Activated CD8-positive, alpha-beta T cell treated with anti-CD3 and anti-CD28 coated beads, Interleukin-2, amount 10 ng/mL, durations not matched to agents 7 days and 5 days (primary cell): ENCODE measurements at regions of chr10 and their contacts with region 1.

Region 1: DNA sequence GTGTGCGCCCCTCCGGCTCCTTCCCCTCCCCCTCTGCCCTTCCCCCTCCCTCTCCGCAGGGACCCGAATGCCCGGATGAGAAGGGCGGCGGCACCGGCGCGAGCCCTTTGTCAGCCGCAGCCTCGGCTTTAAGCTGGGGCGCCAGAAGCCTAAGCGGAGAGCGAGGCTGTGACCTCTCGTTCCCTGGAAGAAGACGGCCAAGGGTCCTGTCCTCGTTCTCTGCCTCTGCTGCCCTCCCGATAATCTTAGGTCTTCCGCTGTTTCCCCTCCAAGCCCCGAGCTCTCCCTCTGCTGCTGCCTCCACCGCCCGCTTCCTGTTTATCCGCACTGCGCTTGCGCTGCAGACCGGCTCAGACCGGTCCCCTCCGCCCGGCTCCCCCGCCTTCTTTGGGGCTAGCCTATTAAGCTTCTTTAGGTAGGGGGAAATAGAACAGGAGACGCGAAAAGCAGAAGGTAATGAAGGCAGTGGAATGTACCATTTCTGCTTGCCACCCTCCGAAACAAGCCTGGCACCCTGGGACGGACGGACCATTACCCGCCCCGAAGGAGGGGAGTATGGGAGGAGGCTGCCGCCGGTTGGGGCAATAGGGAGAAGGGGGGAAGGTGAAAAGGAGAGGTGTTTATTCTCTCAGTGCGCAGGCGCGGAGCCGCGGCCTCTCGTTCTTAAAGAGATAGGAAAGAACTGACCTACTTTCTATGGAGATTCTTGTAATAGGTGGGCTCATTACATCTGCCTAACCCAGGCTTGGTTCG is at the start of gene OGA:
- DNase-seq: peak; percentile 99
- ATAC-seq: peak; percentile 93
- H3K4me3 Mint-ChIP-seq: peak within 1 kb of the TSS; percentile 96
- H3K27ac Mint-ChIP-seq: peak within 1 kb of the TSS; percentile 99
- H3K4me1 Mint-ChIP-seq: peaks cover 31% of the 10 kb centered on the region
- H3K27me3 Mint-ChIP-seq: no peaks in the 10 kb centered on the region
- total RNA-seq, gene OGA: 122 to 129 TPM

Region 2: GRCh38 chr10:101693978-101694673 is 124.2 kb before region 1 on chr10:
- CTCF ChIA-PET with region 1: no interaction called
- POLR2A ChIA-PET with region 1: interaction called, 10 read pairs
- DNase-seq: peak; percentile 73
- ATAC-seq: peak; percentile 83
- H3K4me3 Mint-ChIP-seq: peak overlapping the region; percentile 97
- H3K27ac Mint-ChIP-seq: peak overlapping the region; percentile 98
- H3K4me1 Mint-ChIP-seq: peaks cover 35% of the 10 kb centered on the region
- H3K27me3 Mint-ChIP-seq: no peaks in the 10 kb centered on the region

Region 3: DNA sequence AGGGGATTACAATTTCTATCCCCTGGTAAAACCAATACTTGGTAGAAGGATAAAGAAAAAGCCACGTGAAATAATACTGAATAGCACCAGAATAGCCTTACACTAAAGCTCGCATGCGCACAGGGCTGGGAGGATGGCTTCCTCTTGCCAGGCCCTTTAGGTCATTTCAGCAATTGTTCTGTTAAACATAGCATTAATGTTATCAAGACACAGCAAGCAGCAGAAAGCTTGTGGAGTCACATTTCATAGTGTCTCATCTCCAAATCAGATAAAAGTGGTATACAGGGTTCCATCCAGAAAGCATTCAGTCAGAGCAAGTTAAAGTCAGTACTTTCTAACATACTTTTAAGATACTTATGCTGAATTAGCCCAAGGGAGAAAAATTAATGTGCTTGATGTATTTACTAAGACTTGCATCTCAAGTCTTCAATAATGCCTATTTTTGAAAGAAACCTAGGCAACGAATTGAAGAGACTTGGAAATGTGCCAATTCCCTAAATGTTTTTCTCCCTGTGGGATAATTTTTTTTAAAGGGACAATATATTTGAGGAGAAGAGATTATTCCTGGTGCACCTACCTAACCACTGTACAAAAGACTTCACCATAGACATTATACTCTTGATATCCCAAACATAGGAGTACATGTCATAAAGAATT is 20.8 kb before region 1 on chr10:
- CTCF ChIA-PET with region 1: interaction called, 3 read pairs
- POLR2A ChIA-PET with region 1: interaction called, 12 read pairs
- DNase-seq: no peak
- ATAC-seq: no peak
- H3K4me3 Mint-ChIP-seq: no peak overlapping the region
- H3K27ac Mint-ChIP-seq: no peak overlapping the region
- H3K4me1 Mint-ChIP-seq: peaks cover 8% of the 10 kb centered on the region
- H3K27me3 Mint-ChIP-seq: no peaks in the 10 kb centered on the region

Region 4: GRCh38 chr10:101830322-101831168 is 12.2 kb after region 1 on chr10:
- CTCF ChIA-PET with region 1: interaction called, 22 read pairs
- POLR2A ChIA-PET with region 1: interaction called, 49 read pairs
- DNase-seq: peak; percentile 92
- ATAC-seq: peak; percentile 84
- H3K4me3 Mint-ChIP-seq: peak overlapping the region; percentile 66
- H3K27ac Mint-ChIP-seq: peak overlapping the region; percentile 82
- H3K4me1 Mint-ChIP-seq: peaks cover 52% of the 10 kb centered on the region
- H3K27me3 Mint-ChIP-seq: no peaks in the 10 kb centered on the region

Region 5: DNA sequence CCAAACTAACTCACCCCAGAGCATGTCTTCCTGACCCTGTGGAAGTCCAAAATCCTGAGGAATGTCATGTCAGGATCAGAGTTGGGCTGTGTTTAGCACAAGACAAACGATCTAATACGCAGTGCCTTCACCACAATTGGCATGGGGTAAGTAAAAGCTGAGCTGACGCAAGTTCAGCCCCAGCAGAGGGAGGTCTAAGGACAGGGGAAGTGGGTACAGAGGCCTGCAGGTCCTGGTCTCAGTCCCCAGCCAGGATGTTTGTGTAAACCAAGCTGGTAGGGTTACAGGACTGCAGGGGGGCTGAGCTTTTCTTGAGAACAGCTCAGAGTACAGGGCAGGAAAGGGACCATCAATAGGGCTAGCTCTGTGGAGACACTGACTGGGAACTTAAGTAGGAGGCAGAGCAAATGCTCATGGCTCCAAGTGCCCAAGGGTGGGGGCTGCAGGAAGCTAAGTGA is 30.6 kb after region 1 on chr10:
- CTCF ChIA-PET with region 1: no interaction called
- POLR2A ChIA-PET with region 1: no interaction called
- DNase-seq: no peak
- ATAC-seq: no peak
- H3K4me3 Mint-ChIP-seq: no peak overlapping the region
- H3K27ac Mint-ChIP-seq: peak overlapping the region; percentile 23
- H3K4me1 Mint-ChIP-seq: peaks cover 16% of the 10 kb centered on the region
- H3K27me3 Mint-ChIP-seq: peaks cover 5% of the 10 kb centered on the region